Activated naive CD4-positive, alpha-beta T cell treated with anti-CD3 and anti-CD28 coated beads for 36 hours (primary cell): ENCODE measurements at regions of chr13 and their contacts with region 1.

Region 1: GRCh38 chr13:20773194-20774080 is at the start of gene EEF1AKMT1:
- DNase-seq: peak; percentile 96
- H3K4me3 Mint-ChIP-seq: peak within 1 kb of the TSS; percentile 88
- H3K27ac Mint-ChIP-seq: peak within 1 kb of the TSS; percentile 98
- H3K4me1 Mint-ChIP-seq: peaks cover 40% of the 10 kb centered on the region
- H3K27me3 Mint-ChIP-seq: no peaks in the 10 kb centered on the region
- total RNA-seq, gene EEF1AKMT1: 15.1 to 16.5 TPM

Region 2: GRCh38 chr13:20197361-20197834 is 576.0 kb before region 1 on chr13:
- CTCF ChIA-PET with region 1: no interaction called
- intact Hi-C with region 1: loop called (anchors 5 kb)
- DNase-seq: peak; percentile 23
- H3K4me3 Mint-ChIP-seq: no peak overlapping the region
- H3K27ac Mint-ChIP-seq: no peak overlapping the region
- H3K4me1 Mint-ChIP-seq: peaks cover 13% of the 10 kb centered on the region
- H3K27me3 Mint-ChIP-seq: peaks cover 37% of the 10 kb centered on the region

Region 3: DNA sequence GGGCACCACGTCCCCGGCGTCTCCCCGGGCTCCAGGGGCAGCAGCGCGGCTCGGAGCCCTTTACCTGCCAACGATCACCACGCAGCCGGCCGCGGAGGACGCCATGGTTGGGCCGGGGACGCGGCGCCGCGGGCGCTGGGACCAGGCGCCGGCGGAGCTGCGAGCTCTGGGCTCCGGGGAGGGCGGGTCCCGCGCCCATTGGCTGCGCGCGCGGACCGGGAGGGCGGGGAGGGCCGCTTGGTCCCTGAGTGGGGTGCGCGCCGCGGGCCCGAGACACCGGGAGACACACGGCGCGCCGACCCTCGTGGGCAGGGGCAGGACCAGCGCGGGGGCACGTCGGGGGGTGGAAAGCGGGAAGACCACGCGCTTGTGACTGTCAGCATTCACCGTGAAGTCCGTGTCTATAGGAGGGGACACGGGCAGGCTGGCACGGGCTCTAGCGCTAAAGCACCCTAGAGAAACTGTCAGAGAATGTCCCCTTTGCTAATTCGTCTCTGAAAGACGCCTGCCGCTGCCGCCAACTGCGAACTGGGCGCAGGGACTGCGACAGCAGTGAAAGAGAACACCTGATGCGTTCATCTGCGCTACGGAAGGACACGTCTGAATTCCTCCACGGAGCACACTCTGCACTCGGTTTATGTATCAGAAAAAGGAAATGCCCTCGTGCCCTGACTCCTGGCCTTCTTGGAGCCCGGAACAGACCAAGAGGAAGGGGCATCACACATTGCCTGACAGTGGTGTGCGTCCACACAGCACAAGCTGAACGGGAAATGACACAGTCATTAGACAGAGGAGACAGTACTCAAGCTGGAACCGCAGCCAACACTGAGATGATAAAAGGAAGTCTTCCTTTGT is 247.5 kb before region 1 on chr13 and contains the start of gene CRYL1:
- CTCF ChIA-PET with region 1: no interaction called
- intact Hi-C with region 1: loop called (anchors 1 kb)
- DNase-seq: peak; percentile 76
- H3K4me3 Mint-ChIP-seq: peak within 1 kb of the TSS; percentile 83
- H3K27ac Mint-ChIP-seq: peak within 1 kb of the TSS; percentile 83
- H3K4me1 Mint-ChIP-seq: peaks cover 32% of the 10 kb centered on the region
- H3K27me3 Mint-ChIP-seq: no peaks in the 10 kb centered on the region
- total RNA-seq, gene CRYL1: 8.9 to 9.3 TPM

Region 4: DNA sequence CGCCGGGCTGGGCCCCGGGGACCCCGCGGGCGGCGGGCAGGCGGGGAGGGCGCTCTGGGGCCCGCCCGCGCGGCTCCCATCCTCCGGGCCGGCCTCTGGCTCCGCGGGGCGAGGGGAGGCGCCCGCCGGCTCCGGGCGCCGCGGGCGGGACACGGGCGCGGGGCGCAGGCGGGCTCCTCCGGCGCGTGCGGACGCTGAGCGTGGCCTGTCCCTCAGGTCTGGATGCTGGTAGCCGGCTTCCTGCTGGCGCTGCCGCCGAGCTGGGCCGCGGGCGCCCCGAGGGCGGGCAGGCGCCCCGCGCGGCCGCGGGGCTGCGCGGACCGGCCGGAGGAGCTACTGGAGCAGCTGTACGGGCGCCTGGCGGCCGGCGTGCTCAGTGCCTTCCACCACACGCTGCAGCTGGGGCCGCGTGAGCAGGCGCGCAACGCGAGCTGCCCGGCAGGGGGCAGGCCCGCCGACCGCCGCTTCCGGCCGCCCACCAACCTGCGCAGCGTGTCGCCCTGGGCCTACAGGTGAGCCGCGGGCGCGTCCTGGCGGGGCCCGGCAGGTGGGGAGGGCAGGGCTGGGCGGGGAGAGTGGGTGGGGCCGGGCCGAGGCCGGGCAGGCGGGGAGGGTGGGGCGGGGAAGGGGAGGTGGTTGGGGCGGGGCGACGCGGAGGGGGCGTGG is 69.5 kb before region 1 on chr13:
- CTCF ChIA-PET with region 1: interaction called, 3 read pairs
- intact Hi-C with region 1: loop called (anchors 1 kb)
- DNase-seq: peak; percentile 72
- H3K4me3 Mint-ChIP-seq: no peak overlapping the region
- H3K27ac Mint-ChIP-seq: no peak overlapping the region
- H3K4me1 Mint-ChIP-seq: peaks cover 5% of the 10 kb centered on the region
- H3K27me3 Mint-ChIP-seq: peaks cover 13% of the 10 kb centered on the region

Region 5: GRCh38 chr13:20902438-20903163 is 129.2 kb after region 1 on chr13 and contains the start of gene XPO4:
- CTCF ChIA-PET with region 1: no interaction called
- intact Hi-C with region 1: loop called (anchors 1 kb)
- DNase-seq: peak; percentile 83
- H3K4me3 Mint-ChIP-seq: peak within 1 kb of the TSS; percentile 95
- H3K27ac Mint-ChIP-seq: peak within 1 kb of the TSS; percentile 95
- H3K4me1 Mint-ChIP-seq: peaks cover 29% of the 10 kb centered on the region
- H3K27me3 Mint-ChIP-seq: no peaks in the 10 kb centered on the region
- total RNA-seq, gene XPO4: 20.4 to 21.2 TPM

Region 6: GRCh38 chr13:21476893-21477472 is 703.5 kb after region 1 on chr13:
- CTCF ChIA-PET with region 1: no interaction called
- intact Hi-C with region 1: loop called (anchors 10 kb)
- DNase-seq: peak; percentile 91
- H3K4me3 Mint-ChIP-seq: peak overlapping the region; percentile 73
- H3K27ac Mint-ChIP-seq: peak overlapping the region; percentile 10
- H3K4me1 Mint-ChIP-seq: peaks cover 8% of the 10 kb centered on the region
- H3K27me3 Mint-ChIP-seq: no peaks in the 10 kb centered on the region